Sigmoid colon (tissue), 7 donors: ENCODE measurements at regions of chr13 and their contacts with region 1.

Region 1: DNA sequence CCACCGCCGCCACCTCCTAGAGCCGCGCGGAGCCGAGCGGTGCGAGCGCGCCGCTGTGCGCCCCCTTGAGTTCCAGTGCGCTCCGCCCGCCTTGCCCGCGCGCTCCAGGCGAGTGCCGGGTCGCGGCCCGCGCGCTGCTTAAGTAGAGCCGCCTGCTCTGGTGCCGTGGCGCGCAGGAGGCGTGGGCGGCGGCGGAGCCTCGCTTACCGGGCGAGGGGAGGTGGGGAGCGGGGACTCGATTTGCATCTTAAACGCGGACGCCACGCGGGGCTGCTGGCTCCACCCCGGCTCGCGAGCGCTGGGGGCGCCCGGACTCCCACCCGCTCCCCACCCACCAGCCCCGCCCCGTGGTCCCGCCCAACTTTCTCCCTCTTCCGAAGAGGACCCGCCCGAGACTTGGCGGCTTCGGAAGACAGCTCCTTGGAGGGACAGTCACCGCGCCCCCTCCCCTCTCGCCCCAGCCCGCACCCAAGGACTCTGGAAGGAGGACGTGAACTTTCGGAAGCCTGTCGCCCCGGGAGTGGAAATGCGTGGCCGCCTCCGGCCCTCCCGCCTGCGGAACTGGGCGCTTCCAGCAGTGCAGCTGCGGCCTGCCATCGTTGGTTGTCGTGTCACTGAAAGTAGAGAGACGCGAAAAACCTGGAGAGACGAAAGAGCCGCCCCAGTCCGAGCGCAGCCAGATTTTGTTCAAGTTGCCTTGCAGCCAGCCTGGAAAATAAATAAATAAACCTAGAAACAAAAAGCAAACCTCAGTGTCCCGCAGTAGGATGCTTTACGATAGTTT is at the start of gene KCTD12:
- DNase-seq: peak; percentile 96
- H3K4me3 ChIP-seq: peak within 1 kb of the TSS; percentile 61 to 75 (median 71)
- H3K27ac ChIP-seq: peak within 1 kb of the TSS; percentile 89 to 90 (median 90)
- H3K4me1 ChIP-seq: peaks cover 0 to 34% (median 16%) of the 10 kb centered on the region in 4 donors
- H3K27me3 ChIP-seq: no peaks in the 10 kb centered on the region
- CTCF ChIP-seq: peak in 1 of 4 experiments; percentile 35
- EP300 ChIP-seq: no peak
- POLR2A ChIP-seq: peak in 1 of 2 donors; percentile 45
- total RNA-seq, gene KCTD12: 77.3 to 129 (median 97.5) TPM

Region 2: DNA sequence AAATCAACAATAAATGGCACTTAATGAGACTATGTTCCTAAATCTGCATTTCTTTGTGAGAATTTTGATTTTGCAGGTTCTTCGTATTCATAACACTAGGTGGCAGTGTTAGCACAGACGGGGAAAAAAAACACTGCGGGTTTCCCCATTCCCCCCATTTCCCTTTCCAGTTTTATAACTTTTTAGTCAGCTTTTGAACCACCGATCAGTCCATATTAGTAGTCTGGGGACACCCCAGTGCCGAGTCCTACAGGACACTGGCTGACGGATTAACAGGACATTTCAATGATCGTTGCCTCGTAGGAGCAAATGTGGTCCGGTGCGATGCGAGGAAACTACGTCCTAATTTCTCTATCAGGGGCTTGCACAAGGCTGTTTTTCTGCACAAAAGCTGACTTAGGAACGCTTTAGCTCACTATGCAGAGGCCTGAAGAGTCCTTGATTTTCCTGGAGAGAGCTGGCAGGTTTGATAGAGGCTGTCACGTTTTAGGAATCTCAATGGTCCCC is 1016.0 kb before region 1 on chr13:
- intact Hi-C with region 1: loop called (anchors 5 kb)
- DNase-seq: no peak
- H3K4me3 ChIP-seq: peak overlapping the region in 3 of 4 donors; percentile 26 to 32 (median 31)
- H3K27ac ChIP-seq: no peak overlapping the region
- H3K4me1 ChIP-seq: no peaks in the 10 kb centered on the region
- H3K27me3 ChIP-seq: no peaks in the 10 kb centered on the region
- CTCF ChIP-seq: peak; percentile 40 to 82 (median 58)
- EP300 ChIP-seq: no peak
- POLR2A ChIP-seq: no peak

Region 3: GRCh38 chr13:76667551-76667950 is 218.9 kb before region 1 on chr13:
- intact Hi-C with region 1: loop called (anchors 5 kb)
- DNase-seq: no peak
- H3K4me3 ChIP-seq: no peak overlapping the region
- H3K27ac ChIP-seq: no peak overlapping the region
- H3K4me1 ChIP-seq: peaks cover 0 to 11% (median 4%) of the 10 kb centered on the region in 4 donors
- H3K27me3 ChIP-seq: no peaks in the 10 kb centered on the region
- CTCF ChIP-seq: peak in 3 of 4 experiments; percentile 22 to 45 (median 33)
- EP300 ChIP-seq: no peak
- POLR2A ChIP-seq: no peak

Region 4: DNA sequence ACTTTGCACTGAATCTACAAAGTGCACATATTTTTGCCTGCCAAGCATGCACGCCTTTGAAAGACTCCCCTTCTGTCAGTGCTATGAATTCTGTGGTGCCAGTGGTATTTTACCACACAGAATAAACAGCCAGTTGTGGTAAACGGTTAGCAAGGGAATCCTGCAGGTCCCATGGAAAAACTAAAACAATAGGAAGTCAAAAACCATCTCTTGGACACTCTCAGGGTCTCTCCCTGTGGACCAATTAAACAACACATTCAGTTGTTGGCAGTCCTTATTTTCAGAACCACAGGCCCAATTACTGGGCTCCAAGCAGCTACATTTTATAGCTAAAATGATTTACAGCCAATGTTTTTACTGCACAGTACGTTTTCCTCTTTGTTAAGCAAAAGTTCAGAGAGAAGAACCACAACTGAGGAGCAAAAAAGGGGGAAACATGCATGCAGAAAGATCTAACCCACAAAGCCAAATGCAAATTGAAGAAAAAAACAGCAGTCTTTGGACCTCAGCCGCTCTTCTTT is 117.2 kb before region 1 on chr13:
- intact Hi-C with region 1: loop called (anchors 5 kb)
- DNase-seq: no peak
- H3K4me3 ChIP-seq: no peak overlapping the region
- H3K27ac ChIP-seq: peak overlapping the region in 2 of 4 donors; percentile 27 to 35
- H3K4me1 ChIP-seq: peaks cover 0 to 36% (median 35%) of the 10 kb centered on the region in 4 donors
- H3K27me3 ChIP-seq: no peaks in the 10 kb centered on the region
- CTCF ChIP-seq: no peak
- EP300 ChIP-seq: no peak
- POLR2A ChIP-seq: no peak